Cardiac septum (tissue), 1 donor: ENCODE measurements at regions of chr11 and their contacts with region 1.

Region 1: GRCh38 chr11:111446404-111447111 is 65.6 kb downstream of the BTG4 start:
- DNase-seq: peak; percentile 87

Region 2: GRCh38 chr11:111283945-111284481 is 162.5 kb before region 1 on chr11:
- intact Hi-C with region 1: loop called (anchors 2 kb)
- DNase-seq: no peak